ENCODE measurements at regions of chr12 and their contacts with region 1.

Region 1: DNA sequence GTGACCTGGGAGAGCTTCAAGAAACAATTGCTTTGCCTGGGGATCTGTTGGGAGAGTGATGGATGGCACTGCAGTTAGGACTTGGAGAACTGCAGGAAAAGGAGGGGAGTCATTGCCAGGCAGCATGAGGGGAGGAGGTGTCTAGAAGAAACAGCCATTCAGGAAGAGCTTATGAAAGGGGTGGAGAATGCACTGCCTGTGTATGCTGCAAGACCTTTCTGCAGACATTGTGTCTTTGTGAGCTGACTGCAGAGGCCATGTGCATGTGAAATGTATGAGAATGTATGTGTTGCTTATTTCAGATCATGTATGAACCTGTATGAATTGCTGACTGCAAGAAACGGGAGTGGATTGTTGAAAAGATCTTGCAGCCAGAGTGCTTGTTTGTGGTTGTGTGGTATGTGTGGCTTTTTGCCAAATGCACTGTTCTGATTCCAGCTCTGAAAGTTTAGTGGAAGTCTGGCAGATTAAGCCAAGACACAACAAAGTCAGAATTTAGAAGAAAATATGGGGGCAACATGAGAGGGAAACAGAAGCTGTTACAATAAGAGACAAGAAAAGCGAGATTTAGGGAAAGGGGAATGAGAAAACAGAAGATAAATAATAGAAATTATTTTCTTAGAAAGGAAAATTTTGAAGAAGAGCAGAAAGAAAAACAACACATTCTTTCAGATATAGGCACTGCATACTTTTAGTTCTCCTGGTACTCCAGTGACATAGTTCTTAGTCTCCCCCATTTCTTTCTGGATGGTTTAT is 9.8 kb upstream of the RIMKLB start:
- DNase-seq: no peak
- H3K4me3 ChIP-seq: no peak overlapping the region
- H3K27ac ChIP-seq: no peak overlapping the region
- H3K4me1 ChIP-seq: peaks cover 0 to 29% (median 16%) of the 10 kb centered on the region in 6 donors
- H3K27me3 ChIP-seq: no peaks in the 10 kb centered on the region
- CTCF ChIP-seq: no peak
- POLR2A ChIP-seq: no peak

Region 2: DNA sequence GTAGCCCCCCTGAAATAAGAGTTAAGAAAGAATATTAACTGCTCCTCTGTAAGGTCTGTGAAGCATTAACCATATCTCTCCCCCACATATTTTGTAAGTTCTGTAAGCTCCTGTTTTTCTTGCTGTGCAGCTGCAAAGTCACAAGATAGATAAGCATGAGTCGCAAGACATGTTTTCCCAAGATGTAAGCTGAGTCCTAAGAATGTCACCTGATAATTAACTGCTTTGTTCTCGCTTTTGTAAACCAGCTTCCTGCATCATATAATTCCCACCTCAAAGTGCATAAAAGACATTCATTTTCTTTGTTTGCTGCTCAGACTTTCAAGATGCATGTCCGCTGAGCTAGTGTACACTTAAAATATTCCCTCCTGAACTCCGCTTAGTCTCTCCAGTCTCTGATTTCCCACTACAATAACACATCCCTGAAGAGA is 199.3 kb after region 1 on chr12:
- intact Hi-C with region 1: loop called (anchors 10 kb)
- DNase-seq: no peak
- H3K4me3 ChIP-seq: no peak overlapping the region
- H3K27ac ChIP-seq: no peak overlapping the region
- H3K4me1 ChIP-seq: peaks cover 0 to 9% (median 4%) of the 10 kb centered on the region in 6 donors
- H3K27me3 ChIP-seq: no peaks in the 10 kb centered on the region
- CTCF ChIP-seq: no peak
- POLR2A ChIP-seq: no peak